A549 (cell line): ENCODE measurements at regions of chr5 and their contacts with region 1.

Region 1: DNA sequence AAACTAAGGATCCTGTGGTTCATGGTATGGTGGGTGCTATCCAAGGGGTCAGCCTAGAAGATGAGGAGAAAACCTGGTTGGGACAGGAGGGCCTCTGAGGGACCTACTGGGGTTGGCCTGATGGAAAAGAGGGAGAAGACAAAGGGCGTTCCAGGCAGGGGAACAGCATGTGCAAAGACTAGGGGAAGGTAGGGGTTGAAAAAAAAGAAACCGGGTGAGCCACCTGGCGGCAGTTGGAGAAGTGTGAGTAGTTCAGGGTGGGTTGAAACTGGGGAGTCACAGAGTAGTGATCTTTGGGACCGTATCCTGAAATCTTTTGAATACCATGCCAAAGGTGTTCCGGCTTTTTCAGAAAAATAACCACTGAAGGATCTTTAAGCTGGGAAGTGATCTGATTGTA is 8.7 kb upstream of the GABRP start:
- DNase-seq: no peak
- ATAC-seq: no peak
- H3K4me3 ChIP-seq: no peak overlapping the region
- H3K27ac ChIP-seq: no peak overlapping the region
- H3K4me1 ChIP-seq: no peaks in the 10 kb centered on the region
- CTCF ChIP-seq: no peak
- EP300 ChIP-seq: no peak
- POLR2A ChIP-seq: no peak
- RAD21 ChIP-seq: no peak

Region 2: DNA sequence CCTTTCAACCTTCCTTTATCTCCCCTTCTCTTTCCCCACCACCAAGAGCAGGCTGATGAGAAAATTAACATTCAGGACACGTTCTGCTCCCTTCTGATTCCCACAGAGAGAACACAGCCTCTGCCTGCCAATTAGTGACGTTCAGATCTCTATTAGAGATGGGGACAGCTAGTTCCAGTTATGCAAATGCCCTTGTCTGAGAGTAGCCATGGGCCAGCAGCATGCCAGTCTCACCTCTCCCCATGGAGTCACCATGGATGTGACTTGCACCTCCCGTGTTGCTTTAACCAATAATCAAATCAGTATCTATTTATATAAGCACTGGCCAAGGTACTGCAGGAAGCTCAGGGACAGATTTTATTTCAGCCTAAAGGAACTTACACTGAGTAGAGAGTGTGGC is 209.8 kb before region 1 on chr5:
- CTCF ChIA-PET with region 1: no interaction called
- POLR2A ChIA-PET with region 1: no interaction called
- DNase-seq: no peak
- ATAC-seq: no peak
- H3K4me3 ChIP-seq: no peak overlapping the region
- H3K27ac ChIP-seq: no peak overlapping the region
- H3K4me1 ChIP-seq: no peaks in the 10 kb centered on the region
- CTCF ChIP-seq: no peak
- EP300 ChIP-seq: no peak
- POLR2A ChIP-seq: no peak
- RAD21 ChIP-seq: no peak

Region 3: DNA sequence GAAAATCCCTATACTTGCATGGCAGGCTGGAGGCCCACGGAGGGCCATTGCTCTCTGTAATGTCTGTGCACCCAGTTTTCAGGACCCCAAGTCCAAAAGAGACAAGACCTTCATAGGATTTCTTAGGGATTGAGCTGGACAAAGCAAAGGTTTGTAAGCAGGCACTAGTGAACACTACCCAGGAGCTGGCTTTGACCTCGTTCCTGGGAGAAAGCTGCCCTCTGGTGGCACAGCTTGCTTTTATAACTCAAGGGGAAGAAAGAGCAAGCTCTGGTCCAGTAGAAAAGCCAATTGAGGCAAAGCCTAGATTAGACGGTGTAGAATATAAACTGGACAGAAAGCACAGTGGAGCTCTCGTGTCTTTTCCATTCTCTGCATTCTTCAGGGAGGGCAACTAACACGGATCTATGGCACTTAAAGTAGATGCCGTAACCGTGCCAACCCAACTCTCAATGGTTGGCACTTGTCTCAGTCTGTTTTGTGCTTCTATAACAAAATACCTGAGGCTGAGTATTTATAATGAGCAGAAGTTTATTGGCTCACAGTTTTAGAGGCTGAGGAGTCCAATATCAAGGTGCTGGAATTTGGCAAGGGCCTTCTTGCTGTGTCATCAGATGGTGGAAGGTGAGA is 16.6 kb after region 1 on chr5:
- CTCF ChIA-PET with region 1: interaction called, 16 read pairs
- POLR2A ChIA-PET with region 1: no interaction called
- DNase-seq: peak; percentile 53 to 66
- ATAC-seq: peak; percentile 87 to 95
- H3K4me3 ChIP-seq: no peak overlapping the region
- H3K27ac ChIP-seq: no peak overlapping the region
- H3K4me1 ChIP-seq: no peaks in the 10 kb centered on the region
- CTCF ChIP-seq: peak; percentile 73
- EP300 ChIP-seq: no peak
- POLR2A ChIP-seq: no peak
- RAD21 ChIP-seq: peak; percentile 84 to 85